Caco-2 (cell line): ENCODE measurements at regions of chr12 and their contacts with region 1.

Region 1: DNA sequence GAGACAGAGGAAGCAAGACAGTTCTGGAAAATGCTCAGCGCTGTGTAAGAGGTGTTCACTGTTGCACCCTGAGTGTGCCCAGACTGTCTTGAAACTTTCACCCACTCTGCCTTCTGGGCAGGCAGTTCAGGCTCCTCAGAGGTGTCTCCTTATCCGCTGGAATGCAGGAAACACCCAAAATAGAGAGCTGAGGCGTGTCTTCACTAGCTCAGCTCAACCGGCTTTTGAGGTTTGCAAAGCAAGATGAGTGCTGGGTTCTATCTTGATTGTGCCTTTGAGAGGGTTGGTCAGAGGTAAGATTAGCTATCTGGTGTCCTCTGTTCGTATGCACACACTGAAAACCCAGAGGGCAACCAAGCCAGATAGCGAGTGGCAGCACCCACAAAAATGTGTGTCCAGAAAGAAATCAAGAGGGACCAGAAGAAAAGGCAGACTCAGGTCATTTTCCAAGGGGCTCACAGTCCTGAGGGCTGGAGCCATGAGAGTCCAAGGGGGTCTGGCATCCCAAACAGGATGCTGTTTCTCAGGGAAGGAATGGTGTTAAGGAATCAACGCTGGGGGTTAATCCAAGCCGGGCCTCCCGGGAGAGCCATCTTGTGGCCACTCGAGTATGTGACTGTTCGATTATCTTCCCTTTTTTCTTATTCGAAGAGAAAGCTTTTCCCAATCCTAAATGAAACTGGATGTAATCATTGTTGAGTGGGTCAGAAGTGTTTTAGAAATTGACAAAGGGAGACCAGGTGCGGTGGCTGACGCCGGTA is 47.1 kb downstream of the TBX3 start:
- DNase-seq: peak; percentile 50 to 74
- H3K4me3 ChIP-seq: no peak overlapping the region
- H3K4me3 Mint-ChIP-seq: peak overlapping the region; percentile 54
- H3K27ac Mint-ChIP-seq: peak overlapping the region; percentile 95
- H3K4me1 ChIP-seq: peaks cover 48% of the 10 kb centered on the region
- H3K4me1 Mint-ChIP-seq: peaks cover 48% of the 10 kb centered on the region
- H3K27me3 ChIP-seq: no peaks in the 10 kb centered on the region
- H3K27me3 Mint-ChIP-seq: no peaks in the 10 kb centered on the region
- CTCF ChIP-seq: peak; percentile 30 to 55

Region 2: GRCh38 chr12:114221136-114221833 is 415.6 kb before region 1 on chr12:
- CTCF ChIA-PET with region 1: no interaction called
- POLR2A ChIA-PET with region 1: no interaction called
- intact Hi-C with region 1: no loop called
- DNase-seq: no peak
- H3K4me3 ChIP-seq: no peak overlapping the region
- H3K4me3 Mint-ChIP-seq: no peak overlapping the region
- H3K27ac Mint-ChIP-seq: no peak overlapping the region
- H3K4me1 ChIP-seq: no peaks in the 10 kb centered on the region
- H3K4me1 Mint-ChIP-seq: no peaks in the 10 kb centered on the region
- H3K27me3 ChIP-seq: no peaks in the 10 kb centered on the region
- H3K27me3 Mint-ChIP-seq: peaks cover 25% of the 10 kb centered on the region
- CTCF ChIP-seq: no peak

Region 3: DNA sequence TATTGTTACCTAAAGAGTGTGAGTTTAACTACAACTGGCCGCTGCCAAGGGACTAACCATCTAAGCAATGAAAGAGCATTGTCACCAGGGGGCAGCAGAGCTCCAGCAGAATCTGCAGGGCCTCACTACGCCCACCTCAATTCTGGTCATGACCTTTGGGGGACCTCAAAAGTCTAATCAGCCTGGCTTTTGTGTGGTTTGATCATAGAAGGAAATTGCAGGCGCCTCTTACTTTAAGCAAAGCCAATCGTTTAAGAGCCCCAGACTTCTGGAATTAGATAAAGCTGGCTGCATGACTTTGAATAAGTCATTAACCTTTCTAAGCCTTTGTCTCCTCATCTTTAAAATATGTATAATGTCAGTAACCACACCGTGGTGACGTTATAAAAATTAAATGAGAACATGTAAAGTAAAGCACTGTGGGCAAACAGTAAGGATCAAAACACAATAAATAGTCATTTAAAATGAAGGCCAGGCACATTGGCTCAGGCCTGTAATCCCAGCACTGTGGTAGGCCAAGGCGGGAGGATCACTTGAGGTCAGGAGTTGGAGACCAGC is 11.5 kb before region 1 on chr12:
- CTCF ChIA-PET with region 1: interaction called, 20 read pairs
- POLR2A ChIA-PET with region 1: no interaction called
- intact Hi-C with region 1: loop called (anchors 1 kb)
- DNase-seq: peak; percentile 76 to 81
- H3K4me3 ChIP-seq: no peak overlapping the region
- H3K4me3 Mint-ChIP-seq: no peak overlapping the region
- H3K27ac Mint-ChIP-seq: peak overlapping the region; percentile 61
- H3K4me1 ChIP-seq: peaks cover 30% of the 10 kb centered on the region
- H3K4me1 Mint-ChIP-seq: peaks cover 44% of the 10 kb centered on the region
- H3K27me3 ChIP-seq: no peaks in the 10 kb centered on the region
- H3K27me3 Mint-ChIP-seq: no peaks in the 10 kb centered on the region
- CTCF ChIP-seq: peak; percentile 80 to 84